MCF 10A (cell line): ENCODE measurements at regions of chr1 and their contacts with region 1.

Region 1: GRCh38 chr1:68173911-68174737 is 58.2 kb downstream of the WLS start:
- DNase-seq: peak; percentile 95
- H3K4me3 Mint-ChIP-seq: peak overlapping the region; percentile 68
- H3K27ac Mint-ChIP-seq: peak overlapping the region; percentile 92
- H3K4me1 Mint-ChIP-seq: peaks cover 45% of the 10 kb centered on the region
- H3K27me3 Mint-ChIP-seq: no peaks in the 10 kb centered on the region
- CTCF ChIP-seq: no peak

Region 2: GRCh38 chr1:67935560-67935959 is 238.6 kb before region 1 on chr1:
- CTCF ChIA-PET with region 1: no interaction called
- POLR2A ChIA-PET with region 1: no interaction called
- intact Hi-C with region 1: no loop called
- DNase-seq: no peak
- H3K4me3 Mint-ChIP-seq: no peak overlapping the region
- H3K27ac Mint-ChIP-seq: no peak overlapping the region
- H3K4me1 Mint-ChIP-seq: no peaks in the 10 kb centered on the region
- H3K27me3 Mint-ChIP-seq: no peaks in the 10 kb centered on the region
- CTCF ChIP-seq: no peak

Region 3: DNA sequence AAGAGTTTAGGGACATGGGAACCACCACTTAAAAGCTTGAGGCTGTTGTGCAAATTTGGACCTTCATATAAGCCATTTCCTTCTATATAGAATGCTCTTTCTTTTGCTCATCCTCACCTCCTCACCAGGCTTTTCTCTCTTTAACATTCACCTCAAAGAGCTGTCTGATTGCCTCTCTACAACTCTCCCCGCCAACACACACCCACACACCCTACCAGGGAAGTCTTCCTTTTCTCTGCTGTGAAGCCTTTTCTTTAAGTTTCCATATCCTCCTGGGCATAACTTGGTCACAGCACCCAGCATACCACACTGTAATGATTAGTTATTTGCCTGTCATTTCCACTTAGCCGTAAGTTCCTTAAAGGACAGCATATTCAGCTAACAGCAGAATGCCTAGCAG is 17.6 kb after region 1 on chr1:
- CTCF ChIA-PET with region 1: interaction called, 17 read pairs
- POLR2A ChIA-PET with region 1: interaction called, 6 read pairs
- intact Hi-C with region 1: no loop called
- DNase-seq: no peak
- H3K4me3 Mint-ChIP-seq: no peak overlapping the region
- H3K27ac Mint-ChIP-seq: peak overlapping the region; percentile 33
- H3K4me1 Mint-ChIP-seq: peaks cover 2% of the 10 kb centered on the region
- H3K27me3 Mint-ChIP-seq: no peaks in the 10 kb centered on the region
- CTCF ChIP-seq: no peak

Region 4: GRCh38 chr1:68197891-68198290 is 23.8 kb after region 1 on chr1:
- CTCF ChIA-PET with region 1: interaction called, 17 read pairs
- POLR2A ChIA-PET with region 1: interaction called, 5 read pairs
- intact Hi-C with region 1: no loop called
- DNase-seq: peak; percentile 75
- H3K4me3 Mint-ChIP-seq: no peak overlapping the region
- H3K27ac Mint-ChIP-seq: peak overlapping the region; percentile 77
- H3K4me1 Mint-ChIP-seq: peaks cover 20% of the 10 kb centered on the region
- H3K27me3 Mint-ChIP-seq: no peaks in the 10 kb centered on the region
- CTCF ChIP-seq: no peak

Region 5: DNA sequence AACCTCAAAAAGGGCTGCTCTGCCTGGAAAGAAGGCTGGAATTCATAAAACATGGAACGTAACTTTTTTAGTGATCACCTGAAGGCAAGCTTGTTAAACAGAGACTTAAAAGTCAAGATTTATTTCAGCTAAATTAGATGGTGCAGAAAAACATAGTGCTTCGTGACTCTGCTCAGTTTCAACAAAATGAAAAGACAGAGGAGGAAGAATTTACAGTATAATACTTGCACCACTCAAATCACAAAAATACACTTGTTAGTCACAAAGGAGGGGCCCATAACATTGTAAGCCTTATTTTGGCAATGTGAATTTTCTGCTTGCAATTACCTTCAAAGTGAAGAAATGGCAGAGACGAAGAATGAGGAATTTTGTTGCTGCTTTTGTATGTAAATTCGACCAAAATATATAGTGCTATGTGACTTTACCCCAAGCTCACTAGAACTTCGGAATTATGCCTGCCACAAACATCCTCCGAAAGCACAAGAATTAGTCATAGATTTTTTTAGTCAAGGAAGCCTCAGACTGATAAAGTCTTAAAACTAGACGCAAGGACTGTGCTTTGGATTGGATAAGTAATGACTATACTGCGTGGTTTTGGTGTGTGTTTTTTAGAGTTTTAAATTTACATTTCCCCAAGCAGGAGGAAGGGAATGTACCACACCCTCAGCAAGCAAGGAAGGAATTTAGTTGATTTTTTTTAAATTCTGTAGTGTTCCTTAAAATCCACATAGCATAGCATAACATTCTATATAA is 47.7 kb after region 1 on chr1:
- CTCF ChIA-PET with region 1: interaction called, 10 read pairs
- POLR2A ChIA-PET with region 1: interaction called, 3 read pairs
- intact Hi-C with region 1: no loop called
- DNase-seq: peak; percentile 22
- H3K4me3 Mint-ChIP-seq: peak overlapping the region; percentile 45
- H3K27ac Mint-ChIP-seq: peak overlapping the region; percentile 83
- H3K4me1 Mint-ChIP-seq: peaks cover 32% of the 10 kb centered on the region
- H3K27me3 Mint-ChIP-seq: no peaks in the 10 kb centered on the region
- CTCF ChIP-seq: no peak